ENCODE measurements at regions of chr3 and their contacts with region 1.

Region 1: DNA sequence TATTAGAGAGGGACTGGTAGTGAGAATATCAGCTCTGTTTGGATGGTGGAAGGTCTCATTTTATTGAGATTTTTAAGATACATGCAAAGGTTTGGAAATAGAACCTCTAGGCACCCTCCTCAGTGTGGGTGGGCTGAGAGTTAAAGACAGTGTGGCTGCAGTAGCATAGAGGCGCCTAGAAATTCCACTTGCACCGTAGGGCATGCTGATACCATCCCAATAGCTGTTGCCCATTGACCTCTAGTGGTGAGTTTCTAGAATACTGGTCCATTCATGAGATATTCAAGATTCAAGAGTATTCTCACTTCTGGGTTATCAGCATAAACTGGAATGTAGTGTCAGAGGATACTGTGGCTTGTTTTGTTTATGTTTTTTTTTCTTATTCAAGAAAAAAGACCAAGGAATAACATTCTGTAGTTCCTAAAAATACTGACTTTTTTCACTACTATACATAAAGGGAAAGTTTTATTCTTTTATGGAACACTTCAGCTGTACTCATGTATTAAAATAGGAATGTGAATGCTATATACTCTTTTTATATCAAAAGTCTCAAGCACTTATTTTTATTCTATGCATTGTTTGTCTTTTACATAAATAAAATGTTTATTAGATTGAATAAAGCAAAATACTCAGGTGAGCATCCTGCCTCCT is 87.2 kb downstream of the TGFBR2 start:
- DNase-seq: no peak
- ATAC-seq: peak; percentile 70

Region 2: GRCh38 chr3:30112902-30113484 is 580.6 kb before region 1 on chr3:
- intact Hi-C with region 1: loop called (anchors 5 kb)
- DNase-seq: no peak
- ATAC-seq: peak; percentile 69

Region 3: GRCh38 chr3:30199096-30199759 is 494.4 kb before region 1 on chr3:
- intact Hi-C with region 1: loop called (anchors 10 kb)
- DNase-seq: peak; percentile 88
- ATAC-seq: peak; percentile 84

Region 4: DNA sequence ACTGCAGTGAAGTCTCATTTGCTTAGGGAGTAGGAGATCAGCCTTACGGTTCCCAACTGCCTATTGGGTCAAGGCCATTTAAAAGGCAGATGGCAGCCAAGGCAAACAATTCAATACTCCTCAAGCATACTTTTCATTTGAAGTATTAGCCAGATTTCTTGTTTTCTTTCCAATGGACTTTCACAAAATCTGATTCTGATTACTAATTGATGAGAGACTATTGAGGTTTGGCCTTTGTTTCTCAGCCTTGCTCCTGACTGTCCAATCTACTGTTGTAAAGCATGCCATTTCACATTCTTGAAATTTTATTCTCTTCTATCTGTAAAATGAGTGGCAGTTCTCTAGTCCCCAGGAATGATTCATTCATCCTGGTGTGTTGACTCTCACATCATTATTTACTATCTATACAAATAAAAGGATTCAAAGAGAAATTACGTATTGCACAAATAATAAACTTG is 253.4 kb before region 1 on chr3:
- intact Hi-C with region 1: loop called (anchors 10 kb)
- DNase-seq: no peak
- ATAC-seq: peak; percentile 30

Region 5: DNA sequence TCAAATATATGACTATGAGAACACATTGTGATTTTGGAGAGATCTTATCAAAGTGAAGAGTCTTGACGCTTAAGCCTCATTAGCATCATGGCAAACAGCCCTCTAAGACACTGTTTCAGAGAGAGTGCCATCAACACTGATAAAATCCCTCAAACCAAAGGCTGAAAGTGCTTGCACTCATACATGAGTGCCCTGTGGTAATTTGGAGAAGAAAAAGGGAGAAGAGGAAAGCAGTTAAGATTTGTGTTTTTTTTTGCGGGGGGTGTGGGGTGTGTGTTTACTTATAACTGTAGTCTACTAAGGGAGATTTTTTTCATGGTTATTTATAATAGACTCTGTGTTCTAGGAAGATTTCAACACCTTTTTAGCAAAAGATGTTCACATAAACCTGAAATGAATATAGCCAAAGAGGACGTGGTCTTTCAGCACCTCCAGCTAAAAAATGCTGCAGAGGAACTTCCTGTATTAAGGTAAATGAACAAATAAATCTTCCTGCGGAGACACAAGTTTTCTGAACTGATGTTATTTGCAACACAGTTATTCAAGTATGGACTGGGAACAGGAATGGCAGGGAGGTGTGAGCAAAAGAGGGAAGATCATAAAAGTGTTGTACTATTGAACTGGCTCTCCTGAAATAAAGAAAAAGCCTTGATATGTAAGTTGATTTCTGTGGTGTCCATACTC is 169.1 kb before region 1 on chr3:
- intact Hi-C with region 1: loop called (anchors 10 kb)
- DNase-seq: no peak
- ATAC-seq: peak; percentile 19

Region 6: GRCh38 chr3:30606301-30607031 is 87.1 kb before region 1 on chr3 and contains the start of gene TGFBR2:
- intact Hi-C with region 1: loop called (anchors 10 kb)
- DNase-seq: peak; percentile 97
- ATAC-seq: peak; percentile 95
- total RNA-seq, gene TGFBR2: 168 TPM